HAP-1 (cell line): ENCODE measurements at regions of chr5 and their contacts with region 1.

Region 1: GRCh38 chr5:6623941-6624340 is 8.9 kb downstream of the NSUN2 start:
- DNase-seq: no peak
- H3K4me3 ChIP-seq: no peak overlapping the region
- H3K4me1 ChIP-seq: no peaks in the 10 kb centered on the region
- H3K27me3 ChIP-seq: no peaks in the 10 kb centered on the region

Region 2: DNA sequence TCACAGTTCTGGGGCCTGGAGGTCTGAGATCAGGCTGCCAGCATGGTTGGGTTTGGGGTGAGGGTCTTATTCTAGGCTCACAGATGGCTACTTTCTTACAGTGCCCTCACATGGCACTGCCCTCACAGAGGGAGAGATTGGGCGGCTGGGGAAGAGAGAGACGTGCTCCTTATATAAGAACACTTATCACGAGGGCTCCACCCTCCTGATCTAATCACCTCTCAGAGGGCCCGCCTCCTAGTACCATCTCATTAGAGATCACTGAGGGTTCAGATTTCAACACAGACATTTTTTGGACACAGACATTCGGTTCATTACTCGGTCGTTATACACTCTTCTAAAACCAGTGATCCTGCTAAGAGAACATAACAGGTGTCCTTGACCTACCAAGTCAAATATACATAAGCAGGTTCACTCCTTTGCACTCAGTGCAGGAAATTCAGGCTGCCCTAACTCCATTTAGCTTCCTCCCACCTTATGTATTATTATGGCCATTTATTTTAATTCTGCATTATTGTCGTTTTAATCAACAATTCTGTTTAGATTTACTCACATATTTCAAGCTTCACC is 1079.8 kb before region 1 on chr5:
- in situ Hi-C with region 1: no loop called
- DNase-seq: no peak
- H3K4me3 ChIP-seq: no peak overlapping the region
- H3K4me1 ChIP-seq: no peaks in the 10 kb centered on the region
- H3K27me3 ChIP-seq: no peaks in the 10 kb centered on the region

Region 3: GRCh38 chr5:6522331-6522730 is 101.6 kb before region 1 on chr5:
- in situ Hi-C with region 1: no loop called
- DNase-seq: no peak
- H3K4me3 ChIP-seq: no peak overlapping the region
- H3K4me1 ChIP-seq: no peaks in the 10 kb centered on the region
- H3K27me3 ChIP-seq: no peaks in the 10 kb centered on the region

Region 4: GRCh38 chr5:6759413-6759812 is 135.5 kb after region 1 on chr5:
- in situ Hi-C with region 1: loop called (anchors 10 kb)
- DNase-seq: peak in 1 of 2 experiments; percentile 29
- H3K4me3 ChIP-seq: no peak overlapping the region
- H3K4me1 ChIP-seq: no peaks in the 10 kb centered on the region
- H3K27me3 ChIP-seq: no peaks in the 10 kb centered on the region